HCT116 (cell line): ENCODE measurements at regions of chrX and their contacts with region 1.

Region 1: DNA sequence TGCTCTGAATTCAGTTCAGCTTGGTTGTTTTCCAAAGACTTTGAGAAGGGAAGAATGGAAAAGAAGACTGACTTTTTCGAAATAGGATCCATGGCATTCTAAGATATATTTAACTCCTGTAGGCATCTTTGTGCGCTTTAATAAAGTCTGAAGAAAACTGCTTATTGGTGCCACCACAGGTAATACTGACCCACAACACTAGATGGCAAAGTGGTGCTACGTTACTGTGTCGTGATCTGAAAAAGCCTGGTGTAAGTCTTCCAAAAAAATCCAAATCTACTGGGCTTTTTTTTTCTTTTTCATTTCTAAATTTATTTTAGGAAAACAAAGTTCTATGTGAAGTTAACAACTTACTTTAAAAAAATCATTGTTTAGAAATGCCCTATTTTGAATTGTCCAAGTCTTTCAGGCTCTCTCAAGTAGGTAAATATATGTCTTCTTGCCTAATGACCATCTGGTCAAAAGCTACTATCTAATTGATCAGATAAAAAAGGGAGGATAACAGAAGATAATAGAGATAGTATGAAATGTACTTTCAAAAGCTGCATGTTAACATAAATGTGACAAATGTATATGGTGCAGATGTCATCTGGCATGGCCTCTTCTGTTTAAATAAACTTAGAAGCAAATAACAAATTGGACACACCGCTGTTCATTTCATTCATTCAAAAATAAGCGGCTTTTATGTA is 47.0 kb upstream of the MID1IP1 start:
- DNase-seq: peak; percentile 32
- ATAC-seq: peak; percentile 70
- H3K4me3 ChIP-seq: no peak overlapping the region
- H3K27ac ChIP-seq: no peak overlapping the region
- H3K4me1 ChIP-seq: no peaks in the 10 kb centered on the region
- H3K27me3 ChIP-seq: no peaks in the 10 kb centered on the region
- CTCF ChIP-seq: peak; percentile 37 to 59 (median 48); a peak in 5 of 6 replicates
- POLR2A ChIP-seq: no peak
- RAD21 ChIP-seq: peak; percentile 65

Region 2: DNA sequence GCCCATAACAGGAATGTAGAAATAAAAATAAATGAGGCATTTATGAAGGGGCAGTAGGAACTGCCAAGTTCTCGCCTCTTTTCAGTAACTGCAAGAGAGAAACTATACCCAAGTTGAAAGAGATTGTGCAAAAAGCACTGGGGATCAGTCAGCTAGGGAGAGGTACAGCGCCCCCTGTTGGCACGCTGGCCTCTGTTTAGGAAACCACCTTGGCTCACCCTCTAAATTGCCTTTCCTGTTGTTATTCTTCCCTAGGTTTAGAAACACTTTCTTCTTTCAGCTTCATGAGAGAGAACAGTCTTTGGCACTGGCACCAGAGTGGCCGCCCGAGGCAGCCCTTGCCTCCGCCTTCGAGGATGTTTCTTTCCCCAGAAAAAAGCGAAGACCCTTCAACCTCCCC is 395.5 kb after region 1 on chrX:
- CTCF ChIA-PET with region 1: interaction called, 3 read pairs
- POLR2A ChIA-PET with region 1: no interaction called
- RAD21 ChIA-PET with region 1: no interaction called
- intact Hi-C with region 1: loop called (anchors 1 kb)
- DNase-seq: no peak
- ATAC-seq: peak; percentile 57; the same call in 1 of the 2 replicates
- H3K4me3 ChIP-seq: no peak overlapping the region
- H3K27ac ChIP-seq: no peak overlapping the region
- H3K4me1 ChIP-seq: no peaks in the 10 kb centered on the region
- H3K27me3 ChIP-seq: no peaks in the 10 kb centered on the region
- CTCF ChIP-seq: peak; percentile 26 to 71 (median 67); a peak in 5 of 6 replicates
- POLR2A ChIP-seq: no peak
- RAD21 ChIP-seq: peak; percentile 54

Region 3: GRCh38 chrX:39242187-39242586 is 487.9 kb after region 1 on chrX:
- CTCF ChIA-PET with region 1: no interaction called
- POLR2A ChIA-PET with region 1: no interaction called
- RAD21 ChIA-PET with region 1: no interaction called
- intact Hi-C with region 1: loop called (anchors 5 kb)
- DNase-seq: peak; percentile 12
- ATAC-seq: peak; percentile 84
- H3K4me3 ChIP-seq: no peak overlapping the region
- H3K27ac ChIP-seq: no peak overlapping the region
- H3K4me1 ChIP-seq: no peaks in the 10 kb centered on the region
- H3K27me3 ChIP-seq: no peaks in the 10 kb centered on the region
- CTCF ChIP-seq: peak; percentile 48 to 51 (median 51); a peak in 5 of 6 replicates
- POLR2A ChIP-seq: no peak
- RAD21 ChIP-seq: peak; percentile 51

Region 4: GRCh38 chrX:39253551-39253950 is 499.3 kb after region 1 on chrX:
- CTCF ChIA-PET with region 1: no interaction called
- POLR2A ChIA-PET with region 1: no interaction called
- RAD21 ChIA-PET with region 1: no interaction called
- intact Hi-C with region 1: loop called (anchors 5 kb)
- DNase-seq: no peak
- ATAC-seq: no peak
- H3K4me3 ChIP-seq: no peak overlapping the region
- H3K27ac ChIP-seq: no peak overlapping the region
- H3K4me1 ChIP-seq: peaks cover 0 to 6% of the 10 kb centered on the region in 2 experiments; a peak in 1 of 4 replicates
- H3K27me3 ChIP-seq: no peaks in the 10 kb centered on the region
- CTCF ChIP-seq: no peak
- POLR2A ChIP-seq: no peak
- RAD21 ChIP-seq: no peak